ENCODE measurements at regions of chr1 and their contacts with region 1.

Region 1: GRCh38 chr1:89358287-89358893 is 5.5 kb upstream of the GBP6 start:
- DNase-seq: peak; percentile 84
- H3K4me3 ChIP-seq: no peak overlapping the region
- H3K27ac ChIP-seq: no peak overlapping the region
- H3K4me1 ChIP-seq: peaks cover 0 to 10% (median 0%) of the 10 kb centered on the region in 4 donors
- H3K27me3 ChIP-seq: no peaks in the 10 kb centered on the region
- CTCF ChIP-seq: peak; percentile 70 to 78 (median 77)
- EP300 ChIP-seq: no peak
- POLR2A ChIP-seq: no peak

Region 2: GRCh38 chr1:89001510-89001909 is 356.9 kb before region 1 on chr1:
- in situ Hi-C with region 1: loop called in 2 of 4 experiments (anchors 5 to 25 kb)
- intact Hi-C with region 1: no loop called
- DNase-seq: no peak
- H3K4me3 ChIP-seq: no peak overlapping the region
- H3K27ac ChIP-seq: no peak overlapping the region
- H3K4me1 ChIP-seq: no peaks in the 10 kb centered on the region
- H3K27me3 ChIP-seq: no peaks in the 10 kb centered on the region
- CTCF ChIP-seq: no peak
- EP300 ChIP-seq: no peak
- POLR2A ChIP-seq: no peak

Region 3: DNA sequence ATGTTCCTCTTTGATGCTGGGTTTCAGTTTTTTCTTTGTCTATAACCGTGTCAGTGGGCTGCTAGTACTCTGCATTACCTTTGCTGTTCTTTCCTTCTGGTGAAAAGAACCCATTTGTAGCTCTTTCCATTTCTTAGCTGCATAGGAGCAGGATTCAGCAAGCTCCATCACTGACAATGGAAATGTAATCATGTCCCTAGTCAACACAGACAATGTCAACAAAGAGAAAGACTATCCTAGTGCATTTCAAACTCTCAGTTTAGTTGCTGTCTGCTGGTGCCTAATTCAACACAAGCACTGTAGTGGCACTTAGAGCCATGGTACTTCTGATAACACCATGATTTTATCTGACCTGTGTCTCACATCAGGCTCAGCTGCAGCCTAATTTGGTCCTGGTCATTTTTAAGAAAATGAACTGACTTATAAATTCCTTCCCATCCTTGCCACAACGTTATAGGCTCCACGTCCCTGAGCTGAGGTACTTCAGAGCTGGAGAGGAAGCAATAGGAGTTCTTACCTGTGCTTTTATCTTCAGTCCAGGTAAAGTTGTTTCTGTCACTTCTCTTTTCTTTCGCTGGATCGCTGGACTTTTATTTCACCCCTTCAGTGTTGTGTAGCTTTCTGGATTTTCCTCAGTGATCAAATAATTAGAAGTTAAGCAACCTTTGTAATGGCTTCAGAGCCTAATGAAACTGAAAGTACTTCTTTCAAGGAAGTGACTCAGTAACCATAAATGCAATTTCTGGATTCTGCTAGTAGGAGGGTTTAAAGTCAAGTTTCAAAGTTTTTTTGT is 336.0 kb before region 1 on chr1 and contains the start of gene GBP3:
- in situ Hi-C with region 1: loop called in 1 of 4 experiments (anchors 25 kb)
- intact Hi-C with region 1: no loop called
- DNase-seq: no peak
- H3K4me3 ChIP-seq: peak within 1 kb of the TSS; percentile 33 to 55 (median 44)
- H3K27ac ChIP-seq: peak within 1 kb of the TSS; percentile 84 to 91 (median 88)
- H3K4me1 ChIP-seq: peaks cover 5 to 35% (median 6%) of the 10 kb centered on the region in 4 donors
- H3K27me3 ChIP-seq: no peaks in the 10 kb centered on the region
- CTCF ChIP-seq: no peak
- EP300 ChIP-seq: no peak
- POLR2A ChIP-seq: peak; percentile 7
- total RNA-seq, gene GBP3: 5.4 to 102 (median 55.2) TPM

Region 4: DNA sequence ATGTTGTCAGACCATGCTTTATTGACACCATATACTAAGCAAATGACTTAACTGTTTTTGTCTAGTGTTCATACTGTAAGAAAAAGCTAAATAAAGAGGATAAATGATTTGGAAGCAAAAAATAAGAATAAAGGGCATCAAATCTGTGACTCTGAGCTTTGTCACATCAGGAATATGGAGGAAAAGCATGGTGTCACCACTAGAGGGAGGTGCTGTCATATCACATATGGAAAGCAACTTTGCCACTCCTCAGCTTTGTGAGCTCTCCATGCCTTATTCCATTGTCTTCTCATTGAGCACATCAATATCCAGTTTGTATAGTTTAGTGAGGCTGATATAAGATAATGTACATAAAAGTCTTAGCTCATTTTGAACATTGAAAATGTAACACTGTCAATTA is 272.6 kb before region 1 on chr1:
- in situ Hi-C with region 1: loop called in 1 of 4 experiments (anchors 25 kb)
- intact Hi-C with region 1: no loop called
- DNase-seq: peak; percentile 20
- H3K4me3 ChIP-seq: no peak overlapping the region
- H3K27ac ChIP-seq: no peak overlapping the region
- H3K4me1 ChIP-seq: no peaks in the 10 kb centered on the region
- H3K27me3 ChIP-seq: no peaks in the 10 kb centered on the region
- CTCF ChIP-seq: peak in 3 of 5 experiments; percentile 51 to 58 (median 52)
- EP300 ChIP-seq: no peak
- POLR2A ChIP-seq: no peak

Measured in transverse colon (tissue), 4 donors.